Heart right ventricle (tissue), 16 donors: ENCODE measurements at regions of chr7 and their contacts with region 1.

Region 1: GRCh38 chr7:55641273-55641691 is 69.0 kb upstream of the VOPP1 start:
- DNase-seq: peak in 1 of 2 donors; percentile 51
- ATAC-seq: peak; percentile 75 to 96 (median 88)
- H3K4me3 ChIP-seq: no peak overlapping the region
- H3K27ac ChIP-seq: no peak overlapping the region
- H3K4me1 ChIP-seq: peaks cover 0 to 7% (median 0%) of the 10 kb centered on the region in 9 donors
- H3K27me3 ChIP-seq: no peaks in the 10 kb centered on the region
- CTCF ChIP-seq: peak; percentile 55 to 85 (median 80)

Region 2: DNA sequence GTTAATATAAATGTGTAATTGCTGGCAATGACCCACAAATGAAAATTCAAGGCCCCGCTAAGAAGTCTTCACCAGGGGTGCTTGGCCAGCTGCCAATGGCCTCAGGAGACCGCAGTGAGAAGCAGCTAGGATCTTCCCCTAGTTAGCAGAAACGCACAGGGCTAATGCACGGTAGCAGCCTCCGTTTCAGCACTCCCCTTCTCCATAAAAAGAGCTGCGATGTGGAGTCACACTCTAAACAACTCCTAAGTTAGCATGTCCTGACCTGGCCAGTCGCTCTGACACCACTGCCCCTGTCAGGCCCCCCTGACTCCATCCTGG is 82.3 kb after region 1 on chr7:
- intact Hi-C with region 1: loop called in 2 of 10 experiments (anchors 5 to 10 kb)
- DNase-seq: no peak
- ATAC-seq: no peak
- H3K4me3 ChIP-seq: no peak overlapping the region
- H3K27ac ChIP-seq: no peak overlapping the region
- H3K4me1 ChIP-seq: no peaks in the 10 kb centered on the region
- H3K27me3 ChIP-seq: no peaks in the 10 kb centered on the region
- CTCF ChIP-seq: no peak

Region 3: DNA sequence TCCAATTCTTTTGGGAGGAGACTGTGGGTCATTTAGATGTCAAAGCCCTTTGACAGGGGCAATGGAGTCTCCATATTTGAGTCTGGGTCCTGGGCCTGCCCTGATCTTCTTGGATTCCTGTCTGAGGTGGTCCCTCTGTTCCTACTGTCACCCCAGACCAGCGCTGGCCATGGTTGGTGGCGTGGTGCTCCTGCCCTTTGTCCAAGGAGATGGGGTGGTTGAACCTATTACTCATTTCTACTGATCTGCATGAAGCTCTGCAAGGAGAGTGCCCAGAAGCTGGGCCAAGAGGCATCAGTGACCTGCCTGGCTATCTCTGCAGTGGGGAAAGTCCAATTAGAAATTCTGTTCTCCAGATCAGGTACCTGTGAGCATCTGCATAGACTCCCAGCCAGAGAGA is 830.5 kb after region 1 on chr7:
- intact Hi-C with region 1: no loop called
- DNase-seq: no peak
- ATAC-seq: no peak
- H3K4me3 ChIP-seq: no peak overlapping the region
- H3K27ac ChIP-seq: no peak overlapping the region
- H3K4me1 ChIP-seq: no peaks in the 10 kb centered on the region
- H3K27me3 ChIP-seq: no peaks in the 10 kb centered on the region
- CTCF ChIP-seq: no peak